Tibial artery (tissue), 4 donors: ENCODE measurements at regions of chr10 and their contacts with region 1.

Region 1: DNA sequence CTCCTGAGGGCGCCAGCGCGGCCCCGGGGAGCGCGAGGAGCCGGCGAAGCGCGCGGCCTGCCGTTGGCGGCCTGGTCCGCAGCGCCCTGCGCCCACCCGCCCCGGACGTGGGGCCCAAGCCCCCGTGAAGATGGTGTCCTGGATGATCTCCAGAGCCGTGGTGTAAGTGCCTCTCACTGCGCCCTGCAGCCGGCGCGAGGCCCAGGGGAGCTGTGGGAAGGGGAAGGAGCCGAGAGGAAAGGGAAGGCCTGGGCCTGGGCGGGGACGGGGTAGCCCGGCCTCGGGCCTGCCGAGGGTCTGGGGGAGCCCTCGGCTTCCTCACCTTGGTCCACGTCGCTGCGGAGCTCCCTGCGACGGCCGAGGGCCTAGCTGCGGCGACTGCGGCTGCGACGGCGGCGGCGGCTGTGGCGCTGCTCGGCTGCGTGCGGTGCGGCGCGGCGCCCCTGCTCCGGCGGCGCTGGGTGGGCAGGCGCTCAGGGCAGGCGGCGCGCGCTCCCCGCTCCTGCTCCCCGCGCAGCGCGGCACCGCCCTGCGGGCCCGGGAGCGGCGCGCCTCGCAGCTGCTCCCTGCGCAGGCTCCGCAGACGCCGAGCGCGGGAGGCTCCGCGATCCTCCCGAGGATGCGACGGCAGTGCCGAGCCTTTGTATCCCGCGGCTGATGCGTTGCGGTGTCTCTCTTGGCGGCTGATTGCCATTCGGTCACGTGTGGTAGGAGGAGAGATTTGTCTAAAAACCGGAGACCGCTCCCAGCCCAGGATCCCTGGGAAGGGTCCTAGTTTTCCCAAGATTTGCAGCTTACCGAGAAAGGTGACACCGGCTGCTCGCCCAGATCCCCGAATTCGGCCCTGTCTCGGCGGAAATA is 445 bp downstream of the REEP3 start:
- DNase-seq: peak; percentile 64 to 81
- H3K4me3 ChIP-seq: peak overlapping the region; percentile 72 to 91
- H3K27ac ChIP-seq: peak overlapping the region; percentile 97 to 99
- H3K4me1 ChIP-seq: peaks cover 0 to 71% (median 31%) of the 10 kb centered on the region in 4 donors
- H3K27me3 ChIP-seq: no peaks in the 10 kb centered on the region
- CTCF ChIP-seq: no peak

Region 2: GRCh38 chr10:63268798-63269503 is 252.7 kb before region 1 on chr10:
- intact Hi-C with region 1: loop called (anchors 5 kb)
- DNase-seq: peak; percentile 90 to 92
- H3K4me3 ChIP-seq: peak overlapping the region; percentile 59 to 62
- H3K27ac ChIP-seq: peak overlapping the region; percentile 81 to 86
- H3K4me1 ChIP-seq: peaks cover 0 to 25% (median 5%) of the 10 kb centered on the region in 4 donors
- H3K27me3 ChIP-seq: no peaks in the 10 kb centered on the region
- CTCF ChIP-seq: peak; percentile 53 to 75

Region 3: GRCh38 chr10:63588436-63589167 is 67.0 kb after region 1 on chr10:
- intact Hi-C with region 1: loop called (anchors 10 kb)
- DNase-seq: no peak
- H3K4me3 ChIP-seq: no peak overlapping the region
- H3K27ac ChIP-seq: peak overlapping the region in 1 of 2 donors; percentile 14
- H3K4me1 ChIP-seq: peaks cover 0 to 79% (median 29%) of the 10 kb centered on the region in 4 donors
- H3K27me3 ChIP-seq: no peaks in the 10 kb centered on the region
- CTCF ChIP-seq: no peak